ENCODE measurements at regions of chr7 and their contacts with region 1.

Region 1: DNA sequence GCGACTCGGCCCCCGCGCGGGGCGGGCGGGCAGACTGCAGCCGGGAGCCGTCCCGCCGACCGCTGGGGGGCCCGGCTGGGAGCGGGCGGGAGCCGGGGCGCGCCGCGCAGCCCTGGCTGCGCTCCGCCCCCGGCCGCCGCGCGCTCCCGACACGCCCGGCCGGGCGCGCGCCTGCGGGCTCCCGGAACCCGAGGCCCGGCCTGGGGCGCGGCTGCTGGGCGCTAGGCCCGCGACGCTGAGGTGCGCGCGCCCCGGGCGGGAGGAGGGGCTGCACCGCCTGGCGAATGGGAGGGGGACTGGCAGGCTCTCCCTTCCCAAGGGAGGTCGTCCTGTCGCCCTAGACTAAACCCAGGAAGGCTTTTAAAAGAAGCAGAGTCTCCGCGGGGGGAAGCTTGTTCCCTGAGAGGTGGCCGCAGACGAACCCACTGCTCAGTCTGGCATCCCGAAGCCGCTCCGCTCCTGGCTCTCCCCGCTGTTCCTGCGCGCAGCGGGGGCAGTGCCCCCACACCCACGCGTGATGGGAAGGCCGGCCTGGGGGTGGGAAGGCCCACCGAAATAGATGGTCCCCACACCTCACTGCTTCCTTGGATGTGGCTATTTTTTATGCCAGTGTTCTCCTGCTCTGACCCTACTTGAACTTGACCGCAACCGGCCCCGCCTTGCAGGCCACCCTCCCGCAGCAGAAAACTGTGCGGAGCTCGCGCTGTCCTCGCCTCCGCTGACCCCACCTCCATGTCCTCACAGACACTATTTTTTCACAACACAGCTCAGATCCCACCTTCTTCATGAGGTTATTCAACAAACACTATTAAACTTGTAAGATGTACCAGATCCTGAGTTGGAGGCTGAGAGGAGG is at the start of gene VOPP1:
- DNase-seq: peak; percentile 48
- H3K4me3 Mint-ChIP-seq: peak within 1 kb of the TSS; percentile 89
- H3K27ac Mint-ChIP-seq: peak within 1 kb of the TSS; percentile 93
- H3K4me1 Mint-ChIP-seq: peaks cover 63% of the 10 kb centered on the region
- H3K27me3 Mint-ChIP-seq: no peaks in the 10 kb centered on the region
- total RNA-seq, gene VOPP1: 74.5 to 77.2 TPM

Region 2: DNA sequence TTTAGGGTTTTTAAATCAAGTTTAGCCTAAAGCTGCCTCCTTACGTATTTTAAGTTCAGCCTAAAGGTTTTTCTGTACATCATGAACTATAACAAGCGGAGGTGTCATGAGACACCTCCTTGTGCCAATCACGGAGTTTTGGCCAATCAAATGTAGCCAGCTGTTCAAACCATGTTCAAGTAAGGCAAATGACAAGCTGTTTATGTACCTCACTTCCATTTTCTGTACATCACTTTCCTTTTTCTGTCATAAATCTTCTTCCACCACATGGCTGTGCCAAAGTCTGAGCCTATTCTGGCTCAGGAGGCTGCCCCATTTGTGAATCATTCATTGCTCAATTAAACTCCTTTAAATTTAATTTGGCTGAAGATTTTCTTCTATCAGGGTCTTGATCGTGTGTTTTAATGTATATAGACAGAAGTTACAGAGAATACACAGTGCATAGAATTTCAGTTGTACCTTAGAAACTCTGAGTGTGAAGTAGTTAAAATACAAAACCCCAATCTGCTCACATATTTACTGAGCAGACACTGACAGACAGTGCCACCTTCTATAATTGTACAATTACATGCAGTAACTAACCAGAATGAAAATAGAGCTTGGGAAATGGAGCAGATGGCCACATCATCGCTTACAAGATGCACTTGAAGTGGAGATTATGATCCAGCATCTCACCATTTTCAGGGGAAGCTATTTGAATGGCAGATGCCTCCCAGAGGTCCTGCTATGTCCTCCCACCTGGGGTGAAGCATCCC is 284.4 kb before region 1 on chr7:
- CTCF ChIA-PET with region 1: no interaction called
- POLR2A ChIA-PET with region 1: no interaction called
- DNase-seq: no peak
- H3K4me3 Mint-ChIP-seq: no peak overlapping the region
- H3K27ac Mint-ChIP-seq: no peak overlapping the region
- H3K4me1 Mint-ChIP-seq: no peaks in the 10 kb centered on the region
- H3K27me3 Mint-ChIP-seq: peaks cover 59% of the 10 kb centered on the region

Region 3: GRCh38 chr7:55423277-55423711 is 149.3 kb before region 1 on chr7:
- CTCF ChIA-PET with region 1: no interaction called
- POLR2A ChIA-PET with region 1: no interaction called
- DNase-seq: no peak
- H3K4me3 Mint-ChIP-seq: no peak overlapping the region
- H3K27ac Mint-ChIP-seq: no peak overlapping the region
- H3K4me1 Mint-ChIP-seq: peaks cover 3% of the 10 kb centered on the region
- H3K27me3 Mint-ChIP-seq: no peaks in the 10 kb centered on the region

Region 4: GRCh38 chr7:55588379-55588699 is 15.7 kb after region 1 on chr7:
- CTCF ChIA-PET with region 1: interaction called, 10 read pairs
- POLR2A ChIA-PET with region 1: no interaction called
- DNase-seq: no peak
- H3K4me3 Mint-ChIP-seq: no peak overlapping the region
- H3K27ac Mint-ChIP-seq: no peak overlapping the region
- H3K4me1 Mint-ChIP-seq: peaks cover 10% of the 10 kb centered on the region
- H3K27me3 Mint-ChIP-seq: peaks cover 2% of the 10 kb centered on the region

Region 5: DNA sequence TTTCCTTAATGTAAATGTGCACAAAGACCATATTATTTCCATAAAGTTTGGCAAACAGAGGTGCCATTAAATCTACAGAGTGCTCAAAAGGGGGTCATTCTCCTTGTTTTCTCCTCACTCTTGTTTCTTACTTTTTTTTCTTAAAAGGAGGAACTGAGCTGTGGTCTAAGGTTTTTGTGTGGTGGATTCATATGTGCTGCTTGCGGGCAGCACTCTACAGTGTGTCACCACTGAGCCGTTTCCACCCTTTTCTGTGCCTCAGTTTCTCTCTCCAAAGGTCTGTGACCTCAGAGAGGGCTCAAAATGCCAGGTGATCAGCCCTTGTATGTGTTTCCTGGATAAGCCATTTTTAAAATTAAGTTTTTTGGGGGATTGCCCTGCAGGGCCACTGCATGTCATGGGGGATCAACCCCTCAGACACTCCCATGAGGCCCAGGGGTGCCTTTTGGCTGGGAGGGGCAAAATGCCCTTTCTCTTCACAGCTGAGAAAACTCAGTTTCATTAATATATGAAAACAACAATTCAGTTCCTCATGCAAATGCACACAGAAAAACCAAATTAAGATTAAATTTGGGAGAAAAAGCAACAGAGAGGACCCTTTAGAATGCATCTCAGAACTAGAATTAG is 56.6 kb after region 1 on chr7:
- CTCF ChIA-PET with region 1: no interaction called
- POLR2A ChIA-PET with region 1: no interaction called
- DNase-seq: no peak
- H3K4me3 Mint-ChIP-seq: no peak overlapping the region
- H3K27ac Mint-ChIP-seq: no peak overlapping the region
- H3K4me1 Mint-ChIP-seq: no peaks in the 10 kb centered on the region
- H3K27me3 Mint-ChIP-seq: peaks cover 25% of the 10 kb centered on the region

Measured in activated CD4-positive, alpha-beta T cell treated with anti-CD3 and anti-CD28 coated beads, Interleukin-2, amount 10 ng/mL, durations not matched to agents 7 days and 5 days (primary cell).